ENCODE measurements at regions of chr5 and their contacts with region 1.

Region 1: DNA sequence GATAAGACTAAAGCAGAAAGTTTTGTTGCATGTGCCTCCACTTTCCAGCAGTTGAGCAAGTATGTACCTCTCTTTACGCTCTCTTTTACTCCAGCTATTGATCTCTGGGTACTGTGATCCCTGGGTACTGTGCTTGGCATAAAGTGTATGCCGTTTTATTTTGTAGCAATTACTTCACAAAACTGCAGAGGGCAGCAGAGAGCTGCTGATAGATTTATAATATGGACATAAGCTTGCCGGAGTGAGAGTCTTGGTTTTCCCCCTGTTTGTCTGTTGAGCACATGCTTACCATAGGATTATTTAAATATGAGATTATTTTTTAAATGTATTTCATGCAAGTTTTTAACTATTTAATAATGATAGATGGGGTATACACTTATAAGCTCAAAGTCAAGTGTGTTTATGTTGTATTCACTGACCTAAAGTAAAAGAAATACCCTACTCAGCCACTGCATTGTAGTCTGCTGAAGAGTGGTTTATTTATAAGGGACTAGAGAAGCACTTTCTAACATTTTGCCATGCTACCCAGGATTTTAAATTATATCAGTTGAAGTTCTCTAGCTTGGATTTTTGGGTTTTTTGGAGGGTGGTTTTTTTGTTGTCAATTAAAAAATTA is 13.0 kb downstream of the TTC1 start:
- DNase-seq: peak in 32 of 35 experiments; percentile 3 to 84 (median 38)
- ATAC-seq: peak; percentile 78 to 88 (median 83)
- H3K4me3 ChIP-seq: no peak overlapping the region
- H3K4me3 Mint-ChIP-seq: peak overlapping the region in 1 of 3 donors; percentile 44
- H3K27ac ChIP-seq: no peak overlapping the region
- H3K27ac Mint-ChIP-seq: peak overlapping the region; percentile 53 to 86
- H3K4me1 ChIP-seq: peaks cover 5 to 10% of the 10 kb centered on the region in 2 experiments
- H3K4me1 Mint-ChIP-seq: peaks cover 43 to 44% (median 43%) of the 10 kb centered on the region in 3 donors
- H3K27me3 ChIP-seq: no peaks in the 10 kb centered on the region
- H3K27me3 Mint-ChIP-seq: no peaks in the 10 kb centered on the region

Region 2: GRCh38 chr5:158224253-158224652 is 1797.7 kb before region 1 on chr5:
- CTCF ChIA-PET with region 1: interaction called in 1 of 2 experiments, 11 read pairs
- POLR2A ChIA-PET with region 1: no interaction called
- DNase-seq: no peak
- ATAC-seq: no peak
- H3K4me3 ChIP-seq: no peak overlapping the region
- H3K4me3 Mint-ChIP-seq: no peak overlapping the region
- H3K27ac ChIP-seq: no peak overlapping the region
- H3K27ac Mint-ChIP-seq: no peak overlapping the region
- H3K4me1 ChIP-seq: no peaks in the 10 kb centered on the region
- H3K4me1 Mint-ChIP-seq: no peaks in the 10 kb centered on the region
- H3K27me3 ChIP-seq: no peaks in the 10 kb centered on the region
- H3K27me3 Mint-ChIP-seq: peaks cover 0 to 13% of the 10 kb centered on the region in 2 donors

Region 3: GRCh38 chr5:159850160-159850559 is 171.8 kb before region 1 on chr5:
- CTCF ChIA-PET with region 1: no interaction called
- POLR2A ChIA-PET with region 1: no interaction called
- DNase-seq: no peak
- ATAC-seq: no peak
- H3K4me3 ChIP-seq: no peak overlapping the region
- H3K4me3 Mint-ChIP-seq: no peak overlapping the region
- H3K27ac ChIP-seq: no peak overlapping the region
- H3K27ac Mint-ChIP-seq: no peak overlapping the region
- H3K4me1 ChIP-seq: no peaks in the 10 kb centered on the region
- H3K4me1 Mint-ChIP-seq: no peaks in the 10 kb centered on the region
- H3K27me3 ChIP-seq: peaks cover 0 to 2% of the 10 kb centered on the region in 2 experiments
- H3K27me3 Mint-ChIP-seq: peaks cover 0 to 3% of the 10 kb centered on the region in 2 donors

Region 4: DNA sequence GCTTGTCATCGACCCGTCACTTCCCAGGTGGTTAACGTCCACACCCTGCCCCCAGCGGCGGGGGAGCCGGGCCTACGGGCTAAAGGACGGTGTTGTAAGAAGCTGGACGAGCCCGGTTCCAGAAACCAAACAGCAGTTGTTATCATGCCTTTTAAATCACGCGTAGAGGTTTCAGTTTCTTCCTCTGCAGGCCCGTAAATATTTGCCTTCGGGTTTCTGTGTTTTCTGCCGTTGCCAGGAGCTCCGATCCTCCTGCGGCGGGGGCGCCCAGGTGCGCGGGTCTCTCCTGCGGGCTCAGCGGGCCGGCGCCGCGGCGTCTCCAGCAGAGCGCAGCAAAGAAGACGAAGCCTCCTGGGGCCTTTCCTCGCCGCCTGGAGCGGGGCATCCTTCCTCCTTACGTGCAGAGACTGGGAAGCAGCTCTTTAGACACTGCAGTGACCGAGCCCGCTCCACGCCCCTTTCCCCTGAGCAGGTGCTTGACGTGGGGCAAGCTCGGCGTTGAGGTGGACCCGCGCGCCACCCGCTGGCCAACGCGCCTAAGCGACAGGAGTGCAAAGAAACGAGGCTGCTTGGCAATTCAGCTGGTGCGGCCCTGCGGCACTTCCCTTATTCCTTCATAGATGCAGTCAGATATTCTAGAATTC is 34.8 kb before region 1 on chr5:
- CTCF ChIA-PET with region 1: interaction called, 4 to 10 read pairs
- POLR2A ChIA-PET with region 1: no interaction called
- DNase-seq: peak; percentile 31 to 81 (median 61)
- ATAC-seq: peak; percentile 92 to 97 (median 95)
- H3K4me3 ChIP-seq: peak overlapping the region; percentile 38 to 64
- H3K4me3 Mint-ChIP-seq: peak overlapping the region; percentile 61 to 70 (median 69)
- H3K27ac ChIP-seq: no peak overlapping the region
- H3K27ac Mint-ChIP-seq: no peak overlapping the region
- H3K4me1 ChIP-seq: peaks cover 0 to 10% of the 10 kb centered on the region in 2 experiments
- H3K4me1 Mint-ChIP-seq: peaks cover 0 to 6% (median 4%) of the 10 kb centered on the region in 3 donors
- H3K27me3 ChIP-seq: peaks cover 0 to 22% of the 10 kb centered on the region in 2 experiments
- H3K27me3 Mint-ChIP-seq: peaks cover 21 to 35% of the 10 kb centered on the region in 2 donors

Region 5: DNA sequence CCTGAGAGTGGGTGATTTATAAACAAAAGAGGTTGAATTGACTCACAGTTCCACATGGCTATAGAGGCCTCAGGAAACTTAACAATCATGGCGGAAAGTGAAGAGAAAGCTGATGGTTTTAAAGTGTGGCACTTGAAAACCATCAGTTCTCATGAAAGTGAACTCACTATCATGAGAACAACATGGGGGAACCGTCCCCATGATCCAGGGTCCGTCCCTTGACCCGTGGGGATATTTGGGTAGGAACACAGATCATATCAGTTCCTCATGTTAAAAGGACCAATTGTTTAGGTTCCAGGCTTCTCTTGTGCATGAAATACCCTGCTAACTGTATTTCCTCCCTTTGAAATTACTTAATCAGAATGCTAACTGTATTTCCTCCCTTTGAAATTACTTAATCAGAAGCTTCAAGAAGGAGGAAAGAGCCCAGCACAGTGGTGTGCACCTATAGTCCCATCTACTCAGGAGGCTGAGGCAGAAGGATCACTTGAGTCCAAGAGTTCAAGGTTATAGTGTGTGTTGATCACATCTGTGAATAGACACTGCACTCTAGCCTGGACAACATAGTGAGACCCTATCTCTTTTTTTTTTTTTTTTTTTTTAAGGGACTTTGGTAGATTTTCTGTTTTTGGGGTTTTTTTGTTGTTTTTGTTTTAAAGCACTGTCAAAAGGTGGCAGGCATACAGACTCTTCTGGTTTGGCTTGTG is 11.8 kb after region 1 on chr5:
- CTCF ChIA-PET with region 1: interaction called, 3 to 14 read pairs
- POLR2A ChIA-PET with region 1: no interaction called
- DNase-seq: no peak
- ATAC-seq: no peak
- H3K4me3 ChIP-seq: no peak overlapping the region
- H3K4me3 Mint-ChIP-seq: no peak overlapping the region
- H3K27ac ChIP-seq: no peak overlapping the region
- H3K27ac Mint-ChIP-seq: peak overlapping the region in 1 of 2 donors; percentile 34
- H3K4me1 ChIP-seq: no peaks in the 10 kb centered on the region
- H3K4me1 Mint-ChIP-seq: peaks cover 15 to 20% (median 15%) of the 10 kb centered on the region in 3 donors
- H3K27me3 ChIP-seq: no peaks in the 10 kb centered on the region
- H3K27me3 Mint-ChIP-seq: no peaks in the 10 kb centered on the region

Region 6: DNA sequence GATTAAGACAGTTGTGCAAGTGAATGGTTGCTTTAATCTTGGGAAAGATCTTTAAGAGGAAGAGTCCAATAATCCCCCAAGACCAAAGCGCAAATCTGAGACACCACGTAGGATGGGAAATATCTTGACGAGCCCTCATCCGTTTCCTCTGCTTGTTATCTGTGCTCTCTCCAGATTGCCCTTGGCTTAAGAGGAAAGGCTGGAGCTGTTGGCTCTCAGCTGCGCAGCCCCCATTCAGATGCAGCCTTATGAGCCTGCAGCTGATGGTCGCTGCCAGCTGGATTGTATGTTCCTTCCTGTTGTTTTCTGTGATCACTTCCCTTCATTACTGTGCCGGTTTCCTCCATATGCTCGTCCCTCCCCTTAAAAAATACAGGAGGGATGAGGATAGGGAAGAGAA is 49.6 kb after region 1 on chr5:
- CTCF ChIA-PET with region 1: no interaction called
- POLR2A ChIA-PET with region 1: no interaction called
- DNase-seq: no peak
- ATAC-seq: no peak
- H3K4me3 ChIP-seq: no peak overlapping the region
- H3K4me3 Mint-ChIP-seq: no peak overlapping the region
- H3K27ac ChIP-seq: no peak overlapping the region
- H3K27ac Mint-ChIP-seq: peak overlapping the region in 1 of 2 donors; percentile 41
- H3K4me1 ChIP-seq: no peaks in the 10 kb centered on the region
- H3K4me1 Mint-ChIP-seq: peaks cover 4 to 8% (median 5%) of the 10 kb centered on the region in 3 donors
- H3K27me3 ChIP-seq: no peaks in the 10 kb centered on the region
- H3K27me3 Mint-ChIP-seq: no peaks in the 10 kb centered on the region

Region 7: GRCh38 chr5:160390787-160391696 is 369.1 kb after region 1 on chr5:
- CTCF ChIA-PET with region 1: interaction called, 3 to 19 read pairs
- POLR2A ChIA-PET with region 1: interaction called in 1 of 2 experiments, 5 read pairs
- DNase-seq: peak in 1 of 35 experiments; percentile 39
- ATAC-seq: no peak
- H3K4me3 ChIP-seq: no peak overlapping the region
- H3K4me3 Mint-ChIP-seq: no peak overlapping the region
- H3K27ac ChIP-seq: no peak overlapping the region
- H3K27ac Mint-ChIP-seq: no peak overlapping the region
- H3K4me1 ChIP-seq: no peaks in the 10 kb centered on the region
- H3K4me1 Mint-ChIP-seq: no peaks in the 10 kb centered on the region
- H3K27me3 ChIP-seq: no peaks in the 10 kb centered on the region
- H3K27me3 Mint-ChIP-seq: no peaks in the 10 kb centered on the region

Measured in T-cell (primary cell).